ENCODE measurements at regions of chr15 and their contacts with region 1.

Region 1: DNA sequence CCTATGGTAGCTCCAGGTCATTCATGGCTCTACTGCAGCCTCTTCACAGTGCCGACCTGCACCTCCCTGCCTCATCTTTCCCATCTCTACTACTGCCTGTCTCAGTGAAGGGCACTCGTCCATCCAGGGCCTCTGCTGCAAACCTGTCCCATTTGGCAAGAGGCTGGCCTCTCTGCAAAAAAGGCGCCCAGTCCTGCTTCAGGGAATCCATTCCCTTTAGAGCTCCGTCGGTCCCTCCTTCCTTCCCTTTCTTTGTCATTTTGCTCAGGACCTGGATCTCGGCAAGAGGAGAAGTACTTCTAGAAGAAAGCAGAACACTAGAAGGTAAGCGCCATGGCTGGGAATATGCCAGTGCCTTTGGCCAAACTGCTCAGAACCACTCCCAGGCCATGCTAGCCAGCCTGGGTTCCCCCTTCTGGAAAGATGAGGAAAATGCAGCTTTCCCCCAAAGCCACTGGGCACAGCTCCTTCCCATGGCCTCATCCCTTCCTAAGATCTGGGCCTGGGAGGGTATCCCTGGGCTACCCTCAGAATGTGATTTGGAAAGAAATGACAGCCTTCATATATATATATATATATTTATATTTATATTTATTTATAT is 6.4 kb upstream of the ISL2 start:
- H3K4me3 Mint-ChIP-seq: no peak overlapping the region
- H3K27ac Mint-ChIP-seq: no peak overlapping the region
- H3K4me1 Mint-ChIP-seq: peaks cover 18% of the 10 kb centered on the region
- H3K27me3 Mint-ChIP-seq: peaks cover 60% of the 10 kb centered on the region

Region 2: GRCh38 chr15:76078285-76078877 is 251.8 kb before region 1 on chr15:
- intact Hi-C with region 1: no loop called
- H3K4me3 Mint-ChIP-seq: no peak overlapping the region
- H3K27ac Mint-ChIP-seq: peak overlapping the region; percentile 57
- H3K4me1 Mint-ChIP-seq: peaks cover 13% of the 10 kb centered on the region
- H3K27me3 Mint-ChIP-seq: no peaks in the 10 kb centered on the region

Region 3: GRCh38 chr15:76190834-76191538 is 139.2 kb before region 1 on chr15:
- intact Hi-C with region 1: loop called (anchors 2 kb)
- H3K4me3 Mint-ChIP-seq: peak overlapping the region; percentile 67
- H3K27ac Mint-ChIP-seq: peak overlapping the region; percentile 19
- H3K4me1 Mint-ChIP-seq: peaks cover 17% of the 10 kb centered on the region
- H3K27me3 Mint-ChIP-seq: peaks cover 67% of the 10 kb centered on the region

Region 4: DNA sequence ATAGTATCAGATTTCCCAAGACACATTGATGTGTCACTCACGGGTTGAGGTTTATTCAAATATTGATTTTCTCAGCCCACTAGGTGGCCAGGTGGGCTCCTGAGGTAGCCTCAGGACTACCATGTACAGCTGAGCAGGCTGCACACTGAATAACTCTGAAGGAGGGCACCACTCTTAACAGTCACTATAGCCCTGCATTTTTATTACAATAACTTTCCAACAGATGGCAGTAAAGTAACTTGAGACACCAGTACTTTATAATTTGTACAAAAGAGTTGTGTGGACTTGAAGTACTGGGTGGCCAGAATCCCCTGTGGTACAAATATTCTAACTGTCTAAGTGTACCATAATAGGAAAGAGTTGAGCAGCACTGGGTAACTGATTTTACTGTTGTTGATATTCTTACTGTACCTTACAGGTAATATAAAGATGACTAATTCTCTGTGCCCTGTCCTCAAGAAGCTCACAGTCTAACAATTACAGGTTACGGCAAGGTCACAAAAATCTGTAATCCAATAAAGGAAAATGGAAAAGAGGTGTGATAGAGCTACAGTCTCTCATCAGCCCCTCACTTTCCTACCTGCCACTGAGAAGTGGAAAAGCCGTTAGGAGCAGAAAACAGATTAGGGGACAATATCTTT is 94.9 kb before region 1 on chr15:
- intact Hi-C with region 1: loop called (anchors 2 kb)
- H3K4me3 Mint-ChIP-seq: no peak overlapping the region
- H3K27ac Mint-ChIP-seq: no peak overlapping the region
- H3K4me1 Mint-ChIP-seq: no peaks in the 10 kb centered on the region
- H3K27me3 Mint-ChIP-seq: no peaks in the 10 kb centered on the region

Region 5: GRCh38 chr15:76533995-76534536 is 203.9 kb after region 1 on chr15:
- intact Hi-C with region 1: no loop called
- H3K4me3 Mint-ChIP-seq: no peak overlapping the region
- H3K27ac Mint-ChIP-seq: no peak overlapping the region
- H3K4me1 Mint-ChIP-seq: peaks cover 13% of the 10 kb centered on the region
- H3K27me3 Mint-ChIP-seq: no peaks in the 10 kb centered on the region